ENCODE measurements at regions of chr5 and their contacts with region 1.

Region 1: DNA sequence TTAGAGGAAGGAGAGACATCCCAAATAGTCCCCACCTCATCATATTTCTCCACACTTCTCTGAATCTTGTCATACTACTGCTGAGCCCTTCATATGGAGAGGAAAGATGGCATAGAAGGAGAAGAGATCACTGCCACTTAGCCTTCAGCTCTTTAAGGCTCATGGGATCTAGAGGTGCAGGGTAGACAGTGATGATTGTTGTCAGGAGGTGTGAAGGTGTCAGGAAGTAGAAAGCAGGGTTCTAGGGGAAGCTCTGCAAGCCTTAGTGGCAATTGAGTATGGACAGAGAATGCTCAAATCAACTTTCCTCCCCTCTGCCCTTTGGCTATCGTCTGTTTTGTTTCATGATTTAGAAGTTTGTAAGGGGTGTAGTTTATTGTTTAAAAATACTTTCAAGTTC is 505.7 kb downstream of the ZNF608 start:
- DNase-seq: no peak
- ATAC-seq: no peak
- H3K4me3 ChIP-seq: no peak overlapping the region
- H3K27ac ChIP-seq: no peak overlapping the region
- H3K4me1 ChIP-seq: no peaks in the 10 kb centered on the region
- H3K27me3 ChIP-seq: no peaks in the 10 kb centered on the region
- CTCF ChIP-seq: no peak

Region 2: GRCh38 chr5:124263680-124264483 is 23.1 kb after region 1 on chr5:
- intact Hi-C with region 1: loop called in 1 of 3 experiments (anchors 2 kb)
- DNase-seq: no peak
- ATAC-seq: peak in 3 of 4 donors; percentile 41 to 78 (median 52)
- H3K4me3 ChIP-seq: no peak overlapping the region
- H3K27ac ChIP-seq: no peak overlapping the region
- H3K4me1 ChIP-seq: peaks cover 0 to 15% (median 8%) of the 10 kb centered on the region in 3 donors
- H3K27me3 ChIP-seq: no peaks in the 10 kb centered on the region
- CTCF ChIP-seq: no peak

Region 3: GRCh38 chr5:124352312-124352711 is 111.6 kb after region 1 on chr5:
- intact Hi-C with region 1: no loop called
- DNase-seq: no peak
- ATAC-seq: no peak
- H3K4me3 ChIP-seq: no peak overlapping the region
- H3K27ac ChIP-seq: no peak overlapping the region
- H3K4me1 ChIP-seq: no peaks in the 10 kb centered on the region
- H3K27me3 ChIP-seq: no peaks in the 10 kb centered on the region
- CTCF ChIP-seq: no peak

Region 4: GRCh38 chr5:125348221-125348692 is 1107.5 kb after region 1 on chr5:
- intact Hi-C with region 1: no loop called
- DNase-seq: no peak
- ATAC-seq: no peak
- H3K4me3 ChIP-seq: no peak overlapping the region
- H3K27ac ChIP-seq: no peak overlapping the region
- H3K4me1 ChIP-seq: no peaks in the 10 kb centered on the region
- H3K27me3 ChIP-seq: no peaks in the 10 kb centered on the region
- CTCF ChIP-seq: no peak

Measured in pancreas (tissue), 10 donors.